Panc1 (cell line): ENCODE measurements at regions of chr5 and their contacts with region 1.

Region 1: DNA sequence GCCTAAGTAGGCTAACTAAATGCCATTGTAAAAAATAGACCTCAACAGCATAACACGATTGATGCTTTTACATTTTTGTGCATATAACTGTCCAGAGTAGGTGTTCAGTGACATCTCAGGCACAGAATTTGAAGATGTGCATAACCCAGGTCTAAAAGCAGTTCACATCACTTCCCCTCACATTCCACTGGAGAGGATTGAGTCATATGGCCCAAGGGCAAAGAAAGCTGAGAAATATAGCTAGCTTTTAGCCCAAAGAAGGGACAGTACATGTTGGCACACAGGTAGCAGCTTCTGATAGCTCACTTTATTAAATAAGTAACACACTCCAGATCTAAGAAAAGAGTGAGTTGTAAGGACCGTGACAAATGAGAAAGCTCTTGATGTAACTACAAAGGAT is 2259.5 kb upstream of the WWC1 start:
- DNase-seq: no peak
- ATAC-seq: no peak
- H3K4me3 ChIP-seq: no peak overlapping the region
- H3K27ac ChIP-seq: no peak overlapping the region
- H3K4me1 ChIP-seq: no peaks in the 10 kb centered on the region
- H3K27me3 ChIP-seq: no peaks in the 10 kb centered on the region
- CTCF ChIP-seq: no peak

Region 2: GRCh38 chr5:166013415-166013814 is 18.5 kb before region 1 on chr5:
- CTCF ChIA-PET with region 1: no interaction called
- POLR2A ChIA-PET with region 1: interaction called, 12 read pairs
- in situ Hi-C with region 1: no loop called
- intact Hi-C with region 1: no loop called
- DNase-seq: no peak
- ATAC-seq: no peak
- H3K4me3 ChIP-seq: no peak overlapping the region
- H3K27ac ChIP-seq: no peak overlapping the region
- H3K4me1 ChIP-seq: no peaks in the 10 kb centered on the region
- H3K27me3 ChIP-seq: no peaks in the 10 kb centered on the region
- CTCF ChIP-seq: no peak

Region 3: DNA sequence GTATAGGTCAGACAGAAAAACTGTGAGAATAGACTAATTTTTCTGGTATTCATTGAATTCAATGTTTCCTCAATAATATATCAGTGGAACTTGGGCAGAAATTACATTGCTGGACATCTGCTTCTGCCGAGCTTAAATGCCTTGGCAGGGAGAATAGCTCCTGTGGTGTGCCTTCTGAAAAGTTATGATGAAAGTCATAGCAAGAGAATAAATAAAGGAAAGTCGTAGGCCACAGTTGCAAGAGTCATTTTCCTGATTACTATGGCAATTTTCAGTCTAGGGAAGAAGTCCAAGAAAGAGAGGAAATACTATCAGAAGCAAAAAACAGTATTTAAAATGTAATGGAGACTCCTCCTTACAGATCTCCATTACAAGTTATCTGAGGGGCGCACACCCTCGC is 663.4 kb after region 1 on chr5:
- CTCF ChIA-PET with region 1: no interaction called
- POLR2A ChIA-PET with region 1: no interaction called
- in situ Hi-C with region 1: no loop called
- intact Hi-C with region 1: no loop called
- DNase-seq: no peak
- ATAC-seq: no peak
- H3K4me3 ChIP-seq: no peak overlapping the region
- H3K27ac ChIP-seq: no peak overlapping the region
- H3K4me1 ChIP-seq: no peaks in the 10 kb centered on the region
- H3K27me3 ChIP-seq: no peaks in the 10 kb centered on the region
- CTCF ChIP-seq: no peak

Region 4: GRCh38 chr5:167701051-167701450 is 1669.1 kb after region 1 on chr5:
- CTCF ChIA-PET with region 1: no interaction called
- POLR2A ChIA-PET with region 1: interaction called, 11 read pairs
- in situ Hi-C with region 1: no loop called
- intact Hi-C with region 1: no loop called
- DNase-seq: no peak
- ATAC-seq: no peak
- H3K4me3 ChIP-seq: no peak overlapping the region
- H3K27ac ChIP-seq: peak overlapping the region; percentile 93
- H3K4me1 ChIP-seq: peaks cover 21% of the 10 kb centered on the region; the same call in 1 of the 2 replicates
- H3K27me3 ChIP-seq: no peaks in the 10 kb centered on the region
- CTCF ChIP-seq: no peak